Endothelial cell of umbilical vein (primary cell): ENCODE measurements at regions of chr15 and their contacts with region 1.

Region 1: DNA sequence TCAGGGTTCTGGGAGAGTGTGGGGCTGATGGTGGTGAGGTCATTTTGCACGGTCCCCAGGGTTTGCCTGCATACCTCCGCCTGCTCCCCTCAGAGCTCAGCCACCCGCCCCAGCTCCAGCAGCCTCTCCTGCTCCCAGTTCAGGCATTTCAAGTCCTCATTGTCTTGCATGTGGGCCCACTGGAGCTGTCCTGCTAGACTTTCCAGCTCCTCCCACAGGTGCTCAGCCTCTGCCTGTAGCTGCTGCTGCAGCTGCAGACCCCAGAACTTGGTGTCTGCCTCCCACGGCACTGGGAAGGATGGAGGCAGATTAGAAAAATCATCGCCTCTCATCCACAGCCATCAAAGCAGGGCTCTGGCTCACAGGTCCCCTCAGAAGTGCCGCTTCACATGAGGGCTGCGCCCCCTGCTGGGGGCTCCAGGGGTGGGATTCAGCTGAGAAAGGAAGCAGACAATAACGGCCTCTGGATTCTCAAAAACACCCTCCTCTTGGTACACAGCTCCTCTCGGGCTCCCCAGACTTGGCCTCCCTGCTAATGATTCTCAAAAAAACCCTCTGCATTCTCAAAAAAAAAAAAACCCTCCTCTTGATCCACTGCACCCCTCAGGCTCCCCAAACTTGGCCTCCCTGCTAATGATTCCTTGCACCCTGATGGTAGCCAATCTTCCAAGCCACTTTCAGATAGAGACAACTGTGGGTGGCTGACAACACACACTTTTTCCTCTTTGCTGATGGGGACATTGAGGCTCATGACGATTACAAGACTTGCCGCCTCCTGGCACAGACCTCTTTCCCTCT is 89.3 kb upstream of the C2CD4B start:
- DNase-seq: peak; percentile 79
- H3K4me3 ChIP-seq: no peak overlapping the region
- H3K27ac ChIP-seq: no peak overlapping the region
- H3K4me1 ChIP-seq: no peaks in the 10 kb centered on the region
- H3K27me3 ChIP-seq: peaks cover 0 to 2% of the 10 kb centered on the region in 2 experiments
- CTCF ChIP-seq: peak; percentile 81 to 92
- POLR2A ChIP-seq: no peak

Region 2: GRCh38 chr15:62060113-62060895 is 194.0 kb before region 1 on chr15 and contains the start of gene VPS13C:
- CTCF ChIA-PET with region 1: interaction called, 29 read pairs
- POLR2A ChIA-PET with region 1: no interaction called
- dilution Hi-C with region 1: no loop called
- intact Hi-C with region 1: no loop called
- DNase-seq: peak; percentile 98
- H3K4me3 ChIP-seq: peak within 1 kb of the TSS; percentile 90 to 99 (median 92)
- H3K27ac ChIP-seq: peak within 1 kb of the TSS; percentile 81
- H3K4me1 ChIP-seq: peaks cover 25% of the 10 kb centered on the region
- H3K27me3 ChIP-seq: no peaks in the 10 kb centered on the region
- CTCF ChIP-seq: peak; percentile 85 to 91
- POLR2A ChIP-seq: peak; percentile 80
- total RNA-seq, gene VPS13C: 57.5 and 60.3 TPM in 2 replicates

Region 3: DNA sequence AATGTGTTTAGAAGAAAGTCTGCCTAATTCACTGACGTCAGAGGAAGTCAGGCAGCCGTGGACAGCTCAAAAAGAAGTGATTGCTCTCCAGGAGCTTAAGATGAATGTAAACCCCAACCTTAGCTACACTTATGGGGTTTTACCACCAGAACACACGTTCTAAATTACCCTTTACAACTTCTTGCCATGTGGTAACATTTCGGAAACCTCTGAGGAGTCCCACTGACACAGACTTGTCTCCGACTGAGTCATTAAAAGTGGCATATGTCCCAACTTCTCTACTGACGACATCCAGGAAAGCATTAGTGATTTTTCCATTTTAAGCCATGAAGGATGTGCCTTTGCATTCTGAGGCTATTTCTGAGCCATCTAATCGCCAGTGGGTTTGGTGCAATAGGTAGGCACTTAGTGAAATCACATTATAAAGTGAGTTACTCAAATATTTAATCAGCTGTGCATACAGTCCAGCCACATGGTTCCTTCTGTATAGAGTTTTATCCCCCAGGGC is 155.2 kb before region 1 on chr15:
- CTCF ChIA-PET with region 1: interaction called, 11 read pairs
- POLR2A ChIA-PET with region 1: no interaction called
- dilution Hi-C with region 1: no loop called
- intact Hi-C with region 1: no loop called
- DNase-seq: peak; percentile 75
- H3K4me3 ChIP-seq: peak overlapping the region in 1 of 3 experiments; percentile 23
- H3K27ac ChIP-seq: no peak overlapping the region
- H3K4me1 ChIP-seq: peaks cover 4% of the 10 kb centered on the region
- H3K27me3 ChIP-seq: peaks cover 0 to 3% of the 10 kb centered on the region in 2 experiments
- CTCF ChIP-seq: no peak
- POLR2A ChIP-seq: no peak

Region 4: GRCh38 chr15:62138124-62138523 is 116.2 kb before region 1 on chr15:
- CTCF ChIA-PET with region 1: interaction called, 20 read pairs
- POLR2A ChIA-PET with region 1: no interaction called
- dilution Hi-C with region 1: no loop called
- intact Hi-C with region 1: no loop called
- DNase-seq: peak; percentile 94
- H3K4me3 ChIP-seq: no peak overlapping the region
- H3K27ac ChIP-seq: peak overlapping the region; percentile 72
- H3K4me1 ChIP-seq: peaks cover 39% of the 10 kb centered on the region
- H3K27me3 ChIP-seq: no peaks in the 10 kb centered on the region
- CTCF ChIP-seq: no peak
- POLR2A ChIP-seq: no peak

Region 5: GRCh38 chr15:62231856-62232255 is 22.5 kb before region 1 on chr15:
- CTCF ChIA-PET with region 1: interaction called, 12 read pairs
- POLR2A ChIA-PET with region 1: no interaction called
- dilution Hi-C with region 1: no loop called
- intact Hi-C with region 1: no loop called
- DNase-seq: no peak
- H3K4me3 ChIP-seq: no peak overlapping the region
- H3K27ac ChIP-seq: no peak overlapping the region
- H3K4me1 ChIP-seq: no peaks in the 10 kb centered on the region
- H3K27me3 ChIP-seq: peaks cover 7 to 9% of the 10 kb centered on the region in 2 experiments
- CTCF ChIP-seq: no peak
- POLR2A ChIP-seq: no peak